Activated naive CD4-positive, alpha-beta T cell treated with anti-CD3 and anti-CD28 coated beads, Interleukin-2, amount 10 ng/mL, durations not matched to agents 7 days and 5 days (primary cell): ENCODE measurements at regions of chr18 and their contacts with region 1.

Region 1: GRCh38 chr18:42038936-42039335 is 83.9 kb downstream of the PIK3C3 start:
- DNase-seq: no peak
- H3K4me3 Mint-ChIP-seq: no peak overlapping the region
- H3K27ac Mint-ChIP-seq: no peak overlapping the region
- H3K4me1 Mint-ChIP-seq: peaks cover 8% of the 10 kb centered on the region
- H3K27me3 Mint-ChIP-seq: no peaks in the 10 kb centered on the region

Region 2: GRCh38 chr18:41982942-41983660 is 55.8 kb before region 1 on chr18:
- CTCF ChIA-PET with region 1: no interaction called
- DNase-seq: no peak
- H3K4me3 Mint-ChIP-seq: no peak overlapping the region
- H3K27ac Mint-ChIP-seq: peak overlapping the region; percentile 62
- H3K4me1 Mint-ChIP-seq: peaks cover 16% of the 10 kb centered on the region
- H3K27me3 Mint-ChIP-seq: no peaks in the 10 kb centered on the region

Region 3: DNA sequence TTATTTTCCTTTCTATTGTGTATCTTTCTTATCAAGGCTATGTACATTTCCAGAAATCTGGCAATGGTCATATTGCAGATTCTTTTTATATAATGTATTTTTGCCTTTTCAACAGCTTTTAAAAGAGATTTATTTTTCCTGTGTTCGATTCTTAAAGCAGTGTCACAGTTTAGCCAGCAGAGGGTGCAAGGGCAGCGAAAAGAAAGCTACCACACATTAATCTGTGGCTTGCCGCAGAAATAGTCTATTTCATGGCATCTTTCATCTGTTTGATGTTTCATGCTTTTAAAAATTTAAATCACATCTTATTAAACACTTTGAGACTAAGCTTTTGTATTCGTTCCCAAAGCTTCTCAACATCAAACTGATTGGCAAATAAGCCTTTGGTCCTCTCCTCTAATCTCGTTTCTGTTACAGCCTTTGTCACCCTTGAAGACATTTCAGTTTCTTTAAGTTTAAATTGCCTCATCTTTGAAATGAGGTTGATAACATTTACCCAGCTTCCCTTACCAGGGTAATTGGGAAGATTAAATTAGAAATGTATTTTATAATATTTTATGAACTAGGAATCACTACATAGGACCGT is 10.6 kb before region 1 on chr18:
- CTCF ChIA-PET with region 1: interaction called, 12 read pairs
- DNase-seq: peak; percentile 41
- H3K4me3 Mint-ChIP-seq: no peak overlapping the region
- H3K27ac Mint-ChIP-seq: no peak overlapping the region
- H3K4me1 Mint-ChIP-seq: peaks cover 31% of the 10 kb centered on the region
- H3K27me3 Mint-ChIP-seq: no peaks in the 10 kb centered on the region

Region 4: DNA sequence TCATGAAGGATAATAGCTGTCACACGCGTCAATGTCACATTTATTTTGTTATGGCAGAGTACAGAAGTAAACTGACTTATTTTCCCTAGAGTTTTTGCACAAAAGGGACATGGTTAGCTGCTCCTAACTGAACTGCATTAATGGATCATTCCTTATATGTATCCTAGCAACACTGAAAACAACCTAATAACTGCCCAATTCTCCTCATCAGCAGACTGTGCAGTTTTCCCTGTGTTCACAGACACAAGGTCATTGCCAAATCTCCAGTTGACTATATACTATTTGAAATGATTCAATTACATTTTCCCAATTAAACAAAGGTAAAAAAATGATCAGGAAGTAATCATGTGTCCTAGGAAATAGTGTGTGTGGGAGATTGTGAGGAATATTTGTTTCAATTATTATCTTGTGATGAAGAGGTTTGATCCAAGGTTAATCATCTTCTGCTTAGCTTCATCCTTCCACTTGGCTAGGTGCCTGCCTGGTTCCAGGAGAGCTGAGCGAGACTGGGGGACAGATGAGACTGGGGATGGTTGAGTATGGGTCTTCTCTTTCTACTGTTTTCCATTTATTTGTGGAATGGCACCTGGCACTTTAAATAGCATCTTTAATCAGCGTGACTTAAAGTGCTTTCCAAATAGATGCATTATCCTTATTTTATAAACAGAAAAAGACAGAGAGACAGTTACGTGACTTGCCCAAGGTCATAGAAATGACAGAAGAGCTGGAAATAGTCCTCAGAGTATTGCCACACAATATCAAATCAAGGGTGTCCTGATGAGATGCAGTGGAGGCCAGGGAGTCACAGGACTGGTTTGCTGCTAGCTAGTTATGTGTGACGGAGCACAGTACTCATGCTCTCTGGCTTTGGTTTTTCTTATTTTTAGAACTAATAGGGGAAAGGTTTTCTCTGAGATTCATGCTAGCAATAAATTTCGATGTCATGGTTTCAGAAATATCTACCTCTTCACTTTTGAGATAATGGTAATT is 251.7 kb after region 1 on chr18:
- CTCF ChIA-PET with region 1: no interaction called
- DNase-seq: no peak
- H3K4me3 Mint-ChIP-seq: no peak overlapping the region
- H3K27ac Mint-ChIP-seq: no peak overlapping the region
- H3K4me1 Mint-ChIP-seq: no peaks in the 10 kb centered on the region
- H3K27me3 Mint-ChIP-seq: no peaks in the 10 kb centered on the region